Activated CD4-positive, alpha-beta T cell treated with anti-CD3 and anti-CD28 coated beads, Interleukin-2, amount 10 ng/mL, durations not matched to agents 24 days and 14 days (primary cell): ENCODE measurements at regions of chr3 and their contacts with region 1.

Region 1: DNA sequence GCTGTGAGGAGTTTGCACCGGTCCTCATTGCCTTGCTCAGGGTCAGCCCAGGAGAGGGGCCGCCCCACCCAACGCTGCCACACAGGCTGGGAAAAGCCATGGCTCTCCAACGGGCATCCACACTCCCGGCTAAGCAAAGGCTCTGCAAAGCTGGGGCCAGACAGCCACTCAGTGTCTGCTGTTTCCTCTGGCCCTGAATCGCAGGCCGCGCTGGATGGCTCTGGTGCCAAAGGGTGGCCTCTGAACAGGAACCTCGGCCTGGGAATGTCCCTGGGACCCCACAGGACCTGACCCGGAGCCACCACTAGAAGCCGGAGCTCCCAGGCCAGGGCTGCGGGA is 42.9 kb downstream of the RPN1 start:
- DNase-seq: no peak
- H3K4me3 Mint-ChIP-seq: no peak overlapping the region
- H3K27ac Mint-ChIP-seq: no peak overlapping the region
- H3K4me1 Mint-ChIP-seq: no peaks in the 10 kb centered on the region
- H3K27me3 Mint-ChIP-seq: peaks cover 10% of the 10 kb centered on the region

Region 2: GRCh38 chr3:128075516-128076482 is 531.9 kb before region 1 on chr3:
- intact Hi-C with region 1: loop called (anchors 10 kb)
- DNase-seq: peak; percentile 96
- H3K4me3 Mint-ChIP-seq: peak overlapping the region; percentile 66
- H3K27ac Mint-ChIP-seq: no peak overlapping the region
- H3K4me1 Mint-ChIP-seq: peaks cover 8% of the 10 kb centered on the region
- H3K27me3 Mint-ChIP-seq: no peaks in the 10 kb centered on the region

Region 3: DNA sequence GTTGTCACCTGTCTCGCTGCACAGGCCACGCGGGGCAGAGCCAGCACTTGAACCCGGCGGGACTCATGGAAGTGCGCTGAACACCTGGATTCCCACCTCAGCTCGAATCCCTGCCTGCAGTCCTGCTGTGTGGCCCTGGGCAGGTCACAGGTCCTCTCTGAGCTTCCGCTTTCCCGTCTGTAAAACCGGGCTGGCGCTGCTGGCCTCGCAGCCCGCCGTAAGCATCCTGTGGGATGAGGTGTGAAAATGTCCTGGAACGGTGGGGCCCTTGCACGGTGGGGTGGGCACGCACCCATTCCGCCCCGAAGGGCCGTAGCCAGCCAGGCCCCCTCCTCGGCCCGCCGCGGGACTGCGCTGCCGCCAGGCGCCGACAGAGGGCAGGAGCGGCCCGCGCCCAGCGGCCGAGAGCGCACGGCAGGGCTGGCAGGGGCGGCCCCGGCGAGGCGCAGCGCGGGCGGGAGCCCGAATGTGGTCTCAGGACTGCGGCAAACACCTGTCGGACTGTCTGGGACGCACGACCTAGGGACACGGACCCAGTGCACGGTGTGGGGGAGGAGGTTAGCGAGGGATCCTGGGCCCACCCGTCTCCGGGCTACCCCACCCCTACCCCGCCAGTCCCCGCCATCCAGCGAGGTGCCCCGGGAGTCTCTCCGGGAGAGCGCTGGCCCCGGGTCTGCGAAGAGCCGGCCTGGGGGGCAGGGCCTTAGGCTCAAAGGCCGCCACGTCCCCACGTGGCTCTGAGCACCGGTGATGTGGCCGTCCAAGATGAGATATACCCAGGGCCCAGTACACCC is 181.4 kb before region 1 on chr3:
- intact Hi-C with region 1: loop called (anchors 1 kb)
- DNase-seq: peak; percentile 91
- H3K4me3 Mint-ChIP-seq: no peak overlapping the region
- H3K27ac Mint-ChIP-seq: no peak overlapping the region
- H3K4me1 Mint-ChIP-seq: no peaks in the 10 kb centered on the region
- H3K27me3 Mint-ChIP-seq: peaks cover 15% of the 10 kb centered on the region

Region 4: DNA sequence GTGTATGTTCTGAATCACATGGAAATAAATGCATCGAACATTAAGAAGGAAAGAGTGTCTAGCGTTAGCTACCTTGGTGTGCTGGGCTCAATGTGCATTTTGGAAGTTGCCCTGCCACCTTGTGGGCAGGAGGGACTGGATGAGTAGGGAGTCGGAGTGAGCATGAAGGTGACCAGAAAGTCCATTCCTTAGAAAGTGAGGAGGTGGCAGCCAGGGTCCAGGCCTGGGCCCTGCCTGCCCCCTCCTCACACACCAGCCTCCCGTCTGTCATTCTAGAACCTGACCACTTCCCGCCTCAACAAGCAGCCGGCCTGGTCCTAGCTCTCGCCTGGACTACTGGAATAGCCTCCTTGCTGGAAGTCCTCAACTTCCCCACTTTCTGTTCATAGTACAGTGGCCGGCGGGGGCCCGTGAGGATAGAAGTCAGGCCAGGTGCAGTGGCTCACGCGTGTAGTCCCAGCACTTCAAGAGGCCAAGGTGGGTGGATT is 104.5 kb before region 1 on chr3:
- intact Hi-C with region 1: loop called (anchors 2 kb)
- DNase-seq: no peak
- H3K4me3 Mint-ChIP-seq: no peak overlapping the region
- H3K27ac Mint-ChIP-seq: no peak overlapping the region
- H3K4me1 Mint-ChIP-seq: no peaks in the 10 kb centered on the region
- H3K27me3 Mint-ChIP-seq: peaks cover 30% of the 10 kb centered on the region

Region 5: DNA sequence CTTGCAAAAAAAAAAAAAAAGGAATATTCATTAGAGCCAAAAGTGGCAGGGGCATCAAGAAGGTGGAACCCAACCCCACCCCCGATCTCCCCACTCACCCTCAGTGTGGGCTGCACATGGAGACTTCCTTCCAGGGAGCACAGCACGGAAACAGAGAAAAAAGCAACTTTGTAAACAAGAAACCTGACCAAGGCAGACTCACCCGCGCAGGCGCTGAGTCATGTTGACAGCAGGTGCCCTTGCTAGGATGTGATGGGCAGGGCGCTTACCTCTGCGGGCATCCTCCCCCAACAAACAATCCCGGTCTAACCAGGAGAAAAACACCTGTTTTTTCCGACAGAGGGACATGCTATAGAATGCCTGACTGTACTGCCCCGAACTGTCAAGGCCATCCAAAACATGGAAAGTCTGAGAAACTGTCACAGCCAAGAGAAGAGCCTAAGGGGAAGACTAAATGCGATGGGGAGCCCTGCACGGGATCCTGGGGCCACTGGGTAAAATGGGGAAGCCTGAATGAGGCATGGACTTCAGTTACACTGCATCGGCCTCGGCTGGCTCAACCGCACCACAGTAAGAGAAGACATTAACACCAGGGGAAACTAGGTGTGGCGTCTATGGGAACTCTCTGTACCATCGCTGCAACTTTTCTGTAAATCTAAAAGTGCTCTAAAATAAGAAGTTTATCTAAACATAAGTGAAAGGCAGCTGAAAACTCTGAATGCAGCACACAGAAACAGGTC is 48.0 kb before region 1 on chr3:
- intact Hi-C with region 1: no loop called
- DNase-seq: peak; percentile 74
- H3K4me3 Mint-ChIP-seq: no peak overlapping the region
- H3K27ac Mint-ChIP-seq: peak overlapping the region; percentile 14
- H3K4me1 Mint-ChIP-seq: peaks cover 9% of the 10 kb centered on the region
- H3K27me3 Mint-ChIP-seq: peaks cover 34% of the 10 kb centered on the region

Region 6: GRCh38 chr3:128572644-128573105 is 35.0 kb before region 1 on chr3:
- intact Hi-C with region 1: loop called (anchors 5 kb)
- DNase-seq: peak; percentile 74
- H3K4me3 Mint-ChIP-seq: no peak overlapping the region
- H3K27ac Mint-ChIP-seq: peak overlapping the region; percentile 18
- H3K4me1 Mint-ChIP-seq: peaks cover 14% of the 10 kb centered on the region
- H3K27me3 Mint-ChIP-seq: peaks cover 34% of the 10 kb centered on the region

Region 7: GRCh38 chr3:128680602-128681368 is 73.1 kb after region 1 on chr3:
- intact Hi-C with region 1: no loop called
- DNase-seq: peak; percentile 99
- H3K4me3 Mint-ChIP-seq: peak overlapping the region; percentile 93
- H3K27ac Mint-ChIP-seq: peak overlapping the region; percentile 99
- H3K4me1 Mint-ChIP-seq: peaks cover 23% of the 10 kb centered on the region
- H3K27me3 Mint-ChIP-seq: no peaks in the 10 kb centered on the region